AG04450 (cell line): ENCODE measurements at regions of chr4 and their contacts with region 1.

Region 1: GRCh38 chr4:74376888-74377483 is 12.0 kb downstream of the EREG start:
- DNase-seq: no peak
- H3K4me3 ChIP-seq: no peak overlapping the region
- H3K27ac ChIP-seq: no peak overlapping the region
- H3K27me3 ChIP-seq: no peaks in the 10 kb centered on the region
- CTCF ChIP-seq: peak; percentile 72

Region 2: DNA sequence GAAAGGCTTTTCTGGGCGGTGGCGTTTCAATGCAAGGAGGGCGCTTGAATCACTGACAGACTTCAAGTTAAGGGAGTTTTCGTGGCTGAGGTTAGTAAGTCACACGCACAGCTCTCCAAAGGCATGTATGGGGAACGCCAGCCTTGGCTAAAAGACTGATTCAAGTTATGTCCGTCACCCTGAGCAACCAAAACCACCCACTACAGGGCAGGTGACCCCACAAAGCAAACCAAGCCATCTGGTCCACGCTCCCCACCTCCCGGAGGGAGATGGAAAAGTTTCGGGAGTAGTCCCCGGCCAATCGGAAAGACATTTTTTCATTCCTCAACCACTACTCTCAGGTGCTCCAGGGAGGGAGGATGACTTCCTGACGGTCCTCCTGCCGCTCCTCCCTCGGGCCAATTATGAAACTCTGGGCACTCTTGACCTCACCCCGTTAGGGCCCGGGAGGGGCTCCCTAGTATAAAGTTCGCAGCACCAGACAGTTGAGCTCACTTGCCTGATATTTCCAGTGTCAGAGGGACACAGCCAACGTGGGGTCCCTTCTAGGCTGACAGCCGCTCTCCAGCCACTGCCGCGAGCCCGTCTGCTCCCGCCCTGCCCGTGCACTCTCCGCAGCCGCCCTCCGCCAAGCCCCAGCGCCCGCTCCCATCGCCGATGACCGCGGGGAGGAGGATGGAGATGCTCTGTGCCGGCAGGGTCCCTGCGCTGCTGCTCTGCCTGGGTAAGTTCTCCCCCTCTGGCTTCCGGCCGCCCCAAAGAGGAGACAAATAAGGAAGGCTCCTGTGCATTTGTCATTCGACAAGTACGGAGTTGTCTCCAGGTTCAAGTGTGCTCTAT is 12.1 kb before region 1 on chr4 and contains the start of gene EREG:
- CTCF ChIA-PET with region 1: interaction called, 16 read pairs
- POLR2A ChIA-PET with region 1: no interaction called
- DNase-seq: no peak
- H3K4me3 ChIP-seq: peak within 1 kb of the TSS; percentile 65
- H3K27ac ChIP-seq: peak within 1 kb of the TSS; percentile 55
- H3K27me3 ChIP-seq: no peaks in the 10 kb centered on the region
- CTCF ChIP-seq: no peak
- polyA plus RNA-seq, gene EREG: 1.5 and 1.8 TPM in 2 replicates

Region 3: GRCh38 chr4:74517642-74518395 is 140.8 kb after region 1 on chr4:
- CTCF ChIA-PET with region 1: interaction called, 15 read pairs
- POLR2A ChIA-PET with region 1: no interaction called
- DNase-seq: no peak
- H3K4me3 ChIP-seq: no peak overlapping the region
- H3K27ac ChIP-seq: no peak overlapping the region
- H3K27me3 ChIP-seq: no peaks in the 10 kb centered on the region
- CTCF ChIP-seq: no peak

Region 4: GRCh38 chr4:74541667-74542066 is 164.7 kb after region 1 on chr4:
- CTCF ChIA-PET with region 1: interaction called, 12 read pairs
- POLR2A ChIA-PET with region 1: no interaction called
- DNase-seq: no peak
- H3K4me3 ChIP-seq: no peak overlapping the region
- H3K27ac ChIP-seq: no peak overlapping the region
- H3K27me3 ChIP-seq: no peaks in the 10 kb centered on the region
- CTCF ChIP-seq: no peak

Region 5: GRCh38 chr4:74661542-74662171 is 284.7 kb after region 1 on chr4:
- CTCF ChIA-PET with region 1: interaction called, 148 read pairs
- POLR2A ChIA-PET with region 1: no interaction called
- DNase-seq: no peak
- H3K4me3 ChIP-seq: no peak overlapping the region
- H3K27ac ChIP-seq: no peak overlapping the region
- H3K27me3 ChIP-seq: no peaks in the 10 kb centered on the region
- CTCF ChIP-seq: no peak

Region 6: DNA sequence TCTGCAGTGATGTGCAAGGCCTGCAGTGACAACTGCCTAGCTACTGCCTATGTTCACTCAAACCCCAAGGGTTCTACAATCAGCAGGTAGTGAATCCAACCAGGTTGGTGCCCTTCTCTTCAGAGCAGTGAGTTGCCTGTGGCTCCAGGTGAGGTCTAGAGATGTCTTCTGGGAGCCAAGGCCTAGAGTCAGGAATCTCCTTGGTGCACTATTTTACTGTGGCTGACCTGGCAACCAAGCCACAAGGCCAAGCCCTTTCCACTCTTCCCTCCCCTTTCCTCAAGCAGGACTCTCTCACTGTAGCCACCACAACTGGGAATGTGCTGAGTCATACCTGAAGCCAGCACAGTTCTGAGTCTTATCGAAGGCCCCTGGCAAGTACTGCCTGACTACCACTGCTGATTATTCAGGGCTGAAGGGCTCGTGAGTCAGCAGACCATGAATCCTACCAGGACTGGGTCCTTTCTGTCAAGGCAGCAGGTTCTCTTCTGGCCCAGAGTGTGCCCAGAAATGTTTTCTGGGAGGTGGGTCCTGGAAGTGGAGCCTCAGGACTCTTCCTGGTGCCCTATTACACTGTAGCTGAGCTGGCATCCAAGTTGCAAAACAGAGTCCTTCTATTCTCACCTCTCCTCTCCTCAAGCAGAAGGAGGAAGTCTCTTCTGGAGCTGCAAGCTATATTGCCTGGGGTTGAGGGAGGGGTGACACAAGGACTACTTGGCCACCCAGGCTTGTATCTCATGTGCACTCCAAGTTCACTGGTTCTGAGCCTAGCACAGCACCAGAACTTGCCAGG is 305.8 kb after region 1 on chr4:
- CTCF ChIA-PET with region 1: interaction called, 13 read pairs
- POLR2A ChIA-PET with region 1: no interaction called
- DNase-seq: peak; percentile 75
- H3K4me3 ChIP-seq: no peak overlapping the region
- H3K27ac ChIP-seq: peak overlapping the region; percentile 65
- H3K27me3 ChIP-seq: no peaks in the 10 kb centered on the region
- CTCF ChIP-seq: no peak